Heart right ventricle (tissue), 16 donors: ENCODE measurements at regions of chr1 and their contacts with region 1.

Region 1: GRCh38 chr1:172960454-172961208 is 90.1 kb downstream of the TNFSF18 start:
- DNase-seq: no peak
- ATAC-seq: peak in 2 of 8 donors; percentile 30 to 50
- H3K4me3 ChIP-seq: no peak overlapping the region
- H3K27ac ChIP-seq: no peak overlapping the region
- H3K4me1 ChIP-seq: peaks cover 0 to 8% (median 0%) of the 10 kb centered on the region in 9 donors
- H3K27me3 ChIP-seq: no peaks in the 10 kb centered on the region
- CTCF ChIP-seq: peak in 1 of 9 donors; percentile 13

Region 2: GRCh38 chr1:172083191-172083590 is 877.4 kb before region 1 on chr1:
- intact Hi-C with region 1: no loop called
- DNase-seq: no peak
- ATAC-seq: no peak
- H3K4me3 ChIP-seq: no peak overlapping the region
- H3K27ac ChIP-seq: no peak overlapping the region
- H3K4me1 ChIP-seq: no peaks in the 10 kb centered on the region
- H3K27me3 ChIP-seq: no peaks in the 10 kb centered on the region
- CTCF ChIP-seq: no peak

Region 3: DNA sequence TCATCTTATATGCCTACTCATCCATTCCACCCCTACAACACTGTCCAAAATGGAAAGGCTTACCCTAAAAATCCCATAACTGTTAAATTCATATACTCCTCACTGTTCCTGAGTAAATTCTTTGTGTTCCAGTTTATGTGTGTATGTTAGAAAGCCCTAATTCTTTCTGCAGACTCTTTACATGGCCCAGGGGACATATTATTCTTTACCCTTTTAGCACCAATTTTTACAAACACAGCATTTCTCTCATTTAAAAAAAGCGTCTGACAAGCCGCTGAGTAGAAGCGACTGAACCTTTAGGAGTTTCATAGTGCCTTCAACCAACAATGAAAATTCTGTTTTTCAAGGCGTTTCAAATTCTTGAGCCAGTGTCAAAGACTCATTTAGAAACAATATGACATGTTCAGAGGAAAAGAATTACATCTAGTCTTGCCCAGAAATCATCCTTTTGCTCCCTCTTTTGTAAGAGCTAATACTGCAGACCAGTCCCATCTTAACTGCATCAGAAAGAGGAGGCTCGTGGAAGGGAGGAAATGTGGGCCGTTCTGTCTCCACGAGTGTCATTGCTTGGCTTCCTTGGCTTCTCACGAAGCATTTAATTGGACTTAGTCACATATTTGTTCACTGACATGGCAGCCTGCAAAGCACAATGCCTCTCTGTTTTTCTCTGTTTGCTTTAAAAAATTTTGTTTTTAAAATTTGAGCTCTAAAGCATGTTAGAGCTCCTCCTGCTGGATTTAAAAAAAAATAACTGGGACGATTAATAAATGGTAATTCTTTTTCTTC is 561.5 kb before region 1 on chr1:
- intact Hi-C with region 1: no loop called
- DNase-seq: peak in 1 of 2 donors; percentile 54
- ATAC-seq: peak; percentile 80 to 92 (median 86)
- H3K4me3 ChIP-seq: peak overlapping the region in 3 of 10 donors; percentile 8 to 22 (median 12)
- H3K27ac ChIP-seq: peak overlapping the region; percentile 3 to 78 (median 58)
- H3K4me1 ChIP-seq: peaks cover 0 to 51% (median 40%) of the 10 kb centered on the region in 9 donors
- H3K27me3 ChIP-seq: no peaks in the 10 kb centered on the region
- CTCF ChIP-seq: peak; percentile 53 to 80 (median 65)

Region 4: GRCh38 chr1:173002891-173003838 is 42.5 kb after region 1 on chr1:
- intact Hi-C with region 1: loop called in 1 of 10 experiments (anchors 5 kb)
- DNase-seq: no peak
- ATAC-seq: peak in 1 of 8 donors; percentile 53
- H3K4me3 ChIP-seq: no peak overlapping the region
- H3K27ac ChIP-seq: no peak overlapping the region
- H3K4me1 ChIP-seq: no peaks in the 10 kb centered on the region
- H3K27me3 ChIP-seq: no peaks in the 10 kb centered on the region
- CTCF ChIP-seq: no peak

Region 5: GRCh38 chr1:174777262-174777661 is 1816.6 kb after region 1 on chr1:
- intact Hi-C with region 1: no loop called
- DNase-seq: no peak
- ATAC-seq: no peak
- H3K4me3 ChIP-seq: no peak overlapping the region
- H3K27ac ChIP-seq: no peak overlapping the region
- H3K4me1 ChIP-seq: no peaks in the 10 kb centered on the region
- H3K27me3 ChIP-seq: no peaks in the 10 kb centered on the region
- CTCF ChIP-seq: no peak